Activated B cell treated with CpG ODN at 0.5 μM for 24 hours (primary cell): ENCODE measurements at regions of chr11 and their contacts with region 1.

Region 1: GRCh38 chr11:14454861-14455632 is 44.6 kb downstream of the COPB1 start:
- DNase-seq: no peak
- ATAC-seq: no peak
- H3K4me3 Mint-ChIP-seq: no peak overlapping the region
- H3K27ac Mint-ChIP-seq: no peak overlapping the region
- H3K4me1 Mint-ChIP-seq: peaks cover 22% of the 10 kb centered on the region
- H3K27me3 Mint-ChIP-seq: no peaks in the 10 kb centered on the region
- CTCF ChIP-seq: peak; percentile 43

Region 2: DNA sequence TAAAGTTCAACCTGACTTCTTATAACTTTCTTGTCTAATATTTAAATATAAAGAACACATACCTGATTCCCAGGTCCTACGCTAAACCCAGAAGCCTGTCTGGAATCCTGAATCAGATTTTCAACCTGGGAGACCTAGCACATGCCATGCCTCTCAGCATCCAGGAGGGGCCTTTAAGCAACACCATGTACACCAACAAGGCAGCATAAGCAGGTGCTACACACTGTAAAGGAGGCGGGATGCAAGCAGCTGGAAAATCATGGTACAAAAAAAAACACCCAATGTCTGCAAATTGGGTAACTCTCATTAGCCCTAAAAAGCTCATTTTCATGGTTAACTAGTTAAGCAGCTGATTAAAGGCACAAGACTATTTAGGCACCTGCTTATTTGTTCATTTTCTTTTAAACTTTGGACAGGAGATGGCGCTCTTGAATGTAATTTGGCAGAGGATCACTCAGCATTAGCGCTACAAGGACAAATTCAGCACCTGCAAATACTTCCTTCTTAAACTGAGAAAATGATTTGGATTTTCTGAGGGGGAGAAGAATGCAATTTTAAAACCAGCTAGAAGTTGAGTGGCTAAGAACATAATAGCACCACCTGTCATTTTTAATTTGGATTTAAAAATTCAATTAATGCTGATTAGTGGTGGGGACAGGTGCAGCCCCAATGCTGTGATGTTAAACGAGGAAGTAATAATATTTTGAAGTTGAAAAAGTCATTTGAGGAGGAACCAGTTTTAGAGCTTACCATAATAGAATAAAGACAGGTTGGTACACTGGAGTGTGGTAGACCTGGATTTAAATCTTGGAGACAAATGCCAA is 682.6 kb before region 1 on chr11:
- CTCF ChIA-PET with region 1: interaction called, 3 read pairs
- POLR2A ChIA-PET with region 1: no interaction called
- intact Hi-C with region 1: loop called (anchors 2 kb)
- DNase-seq: no peak
- ATAC-seq: peak; percentile 57
- H3K4me3 Mint-ChIP-seq: no peak overlapping the region
- H3K27ac Mint-ChIP-seq: no peak overlapping the region
- H3K4me1 Mint-ChIP-seq: peaks cover 6% of the 10 kb centered on the region
- H3K27me3 Mint-ChIP-seq: peaks cover 15% of the 10 kb centered on the region
- CTCF ChIP-seq: no peak

Region 3: GRCh38 chr11:14249121-14249963 is 205.7 kb before region 1 on chr11:
- CTCF ChIA-PET with region 1: interaction called, 11 read pairs
- POLR2A ChIA-PET with region 1: no interaction called
- intact Hi-C with region 1: no loop called
- DNase-seq: peak; percentile 54
- ATAC-seq: peak; percentile 49
- H3K4me3 Mint-ChIP-seq: peak overlapping the region; percentile 41
- H3K27ac Mint-ChIP-seq: no peak overlapping the region
- H3K4me1 Mint-ChIP-seq: peaks cover 17% of the 10 kb centered on the region
- H3K27me3 Mint-ChIP-seq: peaks cover 27% of the 10 kb centered on the region
- CTCF ChIP-seq: peak; percentile 71

Region 4: GRCh38 chr11:14300661-14301304 is 154.3 kb before region 1 on chr11:
- CTCF ChIA-PET with region 1: interaction called, 245 read pairs
- POLR2A ChIA-PET with region 1: interaction called, 21 read pairs
- intact Hi-C with region 1: loop called (anchors 1 kb)
- DNase-seq: no peak
- ATAC-seq: peak; percentile 92
- H3K4me3 Mint-ChIP-seq: no peak overlapping the region
- H3K27ac Mint-ChIP-seq: no peak overlapping the region
- H3K4me1 Mint-ChIP-seq: peaks cover 60% of the 10 kb centered on the region
- H3K27me3 Mint-ChIP-seq: no peaks in the 10 kb centered on the region
- CTCF ChIP-seq: no peak

Region 5: DNA sequence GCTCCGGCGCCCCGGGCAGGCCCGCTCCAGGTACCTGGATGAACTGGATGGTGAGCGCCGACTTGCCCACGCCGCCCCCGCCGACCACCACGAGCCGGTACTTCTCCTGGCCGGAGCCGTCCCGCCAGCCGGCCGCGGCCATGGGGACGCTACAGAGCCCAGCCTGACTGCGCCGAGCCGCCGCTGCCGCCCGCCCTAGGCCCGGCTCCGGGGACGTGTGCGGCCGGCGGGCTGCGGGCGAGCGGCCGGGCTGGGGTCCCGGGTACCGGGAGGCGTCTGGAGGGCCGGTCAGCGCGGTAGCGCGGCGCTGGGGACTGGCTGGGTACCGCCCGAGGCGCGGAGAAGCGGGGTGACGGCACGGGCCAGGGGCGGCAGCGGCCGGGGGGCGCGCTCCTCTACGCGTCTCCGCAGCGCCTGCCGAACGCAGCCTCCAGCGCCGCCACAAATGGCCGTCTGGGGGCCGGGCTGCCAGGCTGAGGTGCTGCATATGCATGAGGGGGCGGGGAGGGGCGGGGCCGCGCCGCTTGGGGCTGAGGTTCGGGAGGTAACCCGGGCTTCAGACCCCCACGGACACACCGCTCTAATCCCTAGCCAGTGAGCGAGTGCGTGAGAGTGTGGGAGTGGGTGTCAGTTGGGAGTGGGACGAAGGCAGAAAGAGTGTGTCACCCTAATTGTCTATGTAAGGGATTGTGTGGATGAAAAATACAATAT is 96.2 kb before region 1 on chr11 and contains the start of gene RRAS2:
- CTCF ChIA-PET with region 1: interaction called, 6 read pairs
- POLR2A ChIA-PET with region 1: interaction called, 4 read pairs
- intact Hi-C with region 1: loop called (anchors 2 kb)
- DNase-seq: peak; percentile 77
- ATAC-seq: peak; percentile 90
- H3K4me3 Mint-ChIP-seq: peak within 1 kb of the TSS; percentile 89
- H3K27ac Mint-ChIP-seq: peak within 1 kb of the TSS; percentile 81
- H3K4me1 Mint-ChIP-seq: peaks cover 44% of the 10 kb centered on the region
- H3K27me3 Mint-ChIP-seq: no peaks in the 10 kb centered on the region
- CTCF ChIP-seq: no peak
- total RNA-seq, gene RRAS2: 97.7 and 106 TPM in 2 replicates

Region 6: DNA sequence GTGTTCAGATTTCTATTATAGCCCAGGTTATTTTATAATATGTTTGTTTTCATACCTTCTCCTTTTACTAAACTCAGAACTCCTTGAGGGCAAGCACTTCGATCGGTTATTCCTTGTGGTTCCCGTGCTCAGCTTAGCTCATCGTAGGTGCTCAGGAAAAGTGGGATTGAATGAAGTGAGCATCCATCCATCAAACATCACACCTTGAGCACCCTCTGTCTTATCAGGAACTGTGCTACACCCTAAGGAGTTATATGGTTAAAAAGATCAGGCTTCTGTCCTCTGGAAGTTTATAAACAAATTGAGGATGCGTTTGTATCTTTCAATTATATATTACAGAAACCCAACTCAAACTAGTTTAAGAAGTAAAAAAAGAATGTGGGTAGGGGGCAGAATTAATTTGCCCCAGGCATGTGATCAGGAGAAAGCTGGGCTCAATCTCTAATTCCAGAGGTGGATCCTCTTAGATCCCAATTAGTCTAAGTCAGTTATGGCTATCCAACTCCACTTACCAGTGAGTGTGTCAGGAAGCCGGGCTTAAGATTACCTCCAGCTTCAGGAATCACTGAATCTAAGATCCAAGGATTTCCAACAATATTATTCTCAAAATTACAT is 36.1 kb before region 1 on chr11:
- CTCF ChIA-PET with region 1: interaction called, 19 read pairs
- POLR2A ChIA-PET with region 1: no interaction called
- intact Hi-C with region 1: no loop called
- DNase-seq: no peak
- ATAC-seq: no peak
- H3K4me3 Mint-ChIP-seq: no peak overlapping the region
- H3K27ac Mint-ChIP-seq: no peak overlapping the region
- H3K4me1 Mint-ChIP-seq: peaks cover 16% of the 10 kb centered on the region
- H3K27me3 Mint-ChIP-seq: no peaks in the 10 kb centered on the region
- CTCF ChIP-seq: no peak

Region 7: DNA sequence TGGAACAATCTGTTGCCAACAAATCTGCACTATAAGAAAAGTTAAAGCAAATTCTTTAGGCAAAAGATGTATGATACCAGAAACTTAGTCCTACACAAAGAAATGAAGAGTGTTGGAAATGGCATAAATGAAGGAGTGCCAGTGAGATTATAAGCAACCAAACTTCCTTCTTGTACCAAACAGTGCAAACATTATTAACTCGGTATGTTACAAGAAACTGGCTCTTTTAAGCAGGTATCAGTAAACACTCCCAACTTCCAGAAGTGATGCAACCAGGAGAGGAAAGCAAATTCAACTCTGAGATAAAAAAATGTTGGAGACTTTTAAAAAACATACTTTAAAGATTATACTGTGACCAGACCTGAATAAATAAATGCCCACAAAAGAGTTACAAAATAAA is 16.1 kb after region 1 on chr11:
- CTCF ChIA-PET with region 1: interaction called, 13 read pairs
- POLR2A ChIA-PET with region 1: no interaction called
- intact Hi-C with region 1: no loop called
- DNase-seq: no peak
- ATAC-seq: no peak
- H3K4me3 Mint-ChIP-seq: no peak overlapping the region
- H3K27ac Mint-ChIP-seq: no peak overlapping the region
- H3K4me1 Mint-ChIP-seq: no peaks in the 10 kb centered on the region
- H3K27me3 Mint-ChIP-seq: no peaks in the 10 kb centered on the region
- CTCF ChIP-seq: no peak